ENCODE measurements at regions of chr2 and their contacts with region 1.

Region 1: DNA sequence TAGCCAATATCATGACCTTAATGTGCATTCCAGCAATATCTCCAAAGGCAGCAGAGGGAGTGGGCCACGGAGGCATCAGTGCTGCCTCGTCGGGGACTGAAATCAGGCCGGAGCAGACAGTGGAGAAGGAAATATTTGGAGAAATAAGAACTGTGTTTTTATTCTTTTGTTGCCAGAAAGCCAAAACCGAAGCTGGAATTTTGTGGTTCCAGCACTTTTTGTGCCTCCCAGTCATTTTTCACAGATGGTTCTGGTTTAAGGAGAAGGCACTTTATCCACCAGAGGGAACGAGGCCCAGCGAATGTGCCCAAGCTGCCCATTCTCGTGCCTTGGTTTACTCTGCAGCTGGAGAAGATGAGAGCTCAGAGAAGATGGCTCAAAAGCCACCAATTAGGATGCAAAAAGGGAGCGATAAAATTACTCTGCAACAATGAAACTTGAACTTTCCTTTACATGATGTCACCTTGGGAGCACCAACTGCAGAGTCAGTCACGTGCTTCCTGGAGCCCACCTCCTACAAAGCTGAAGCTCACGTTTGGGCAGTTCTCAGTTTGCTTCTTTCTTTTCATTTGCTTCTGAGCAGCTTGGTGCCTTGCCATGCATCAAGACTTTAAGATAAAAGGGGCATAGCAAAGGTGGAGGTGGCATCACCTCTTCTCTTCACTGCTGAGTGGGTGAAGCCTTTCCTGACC is 288.7 kb downstream of the LPIN1 start:
- DNase-seq: no peak
- ATAC-seq: no peak
- H3K4me3 ChIP-seq: no peak overlapping the region
- H3K27ac ChIP-seq: no peak overlapping the region
- H3K4me1 ChIP-seq: no peaks in the 10 kb centered on the region
- H3K27me3 ChIP-seq: no peaks in the 10 kb centered on the region
- CTCF ChIP-seq: no peak

Region 2: GRCh38 chr2:12096051-12096787 is 61.0 kb after region 1 on chr2:
- CTCF ChIA-PET with region 1: no interaction called
- POLR2A ChIA-PET with region 1: interaction called, 10 read pairs
- in situ Hi-C with region 1: no loop called
- intact Hi-C with region 1: no loop called
- DNase-seq: no peak
- ATAC-seq: no peak
- H3K4me3 ChIP-seq: no peak overlapping the region
- H3K27ac ChIP-seq: no peak overlapping the region
- H3K4me1 ChIP-seq: no peaks in the 10 kb centered on the region
- H3K27me3 ChIP-seq: no peaks in the 10 kb centered on the region
- CTCF ChIP-seq: no peak

Region 3: DNA sequence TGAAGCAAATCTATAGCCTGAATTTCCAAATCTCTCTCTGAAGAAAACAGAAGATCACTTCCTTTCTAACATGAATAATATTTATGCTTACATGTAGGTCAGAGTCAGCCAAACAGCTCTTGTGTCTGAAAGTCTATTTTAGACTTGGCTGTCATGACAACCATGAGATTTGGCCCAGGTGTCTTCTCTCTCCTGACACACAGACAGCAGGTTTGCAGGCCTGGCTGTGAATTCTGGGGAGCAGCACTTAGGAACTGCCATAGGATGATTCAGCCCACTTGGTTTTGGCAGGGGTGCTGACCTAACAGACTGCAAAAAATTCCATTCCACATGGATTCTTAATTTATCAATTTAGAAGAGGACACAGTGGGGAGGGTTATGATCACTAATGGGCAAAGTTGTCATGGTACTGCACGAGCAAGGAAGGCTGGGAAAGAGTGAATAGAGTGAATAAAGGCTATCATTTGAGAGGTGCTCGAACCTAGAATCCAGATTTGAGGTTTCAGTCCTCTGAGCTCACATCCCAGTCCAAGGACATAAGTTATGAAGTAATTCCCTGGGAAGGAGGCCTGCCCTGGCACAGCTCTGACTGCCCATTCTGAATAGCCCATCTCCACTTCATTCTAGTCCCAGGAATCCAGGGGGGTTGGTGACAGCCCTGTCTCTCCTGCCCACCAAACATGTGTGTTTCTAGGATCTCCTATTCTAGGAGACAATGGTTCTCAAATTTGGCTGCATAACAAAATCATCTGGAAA is 227.7 kb after region 1 on chr2:
- CTCF ChIA-PET with region 1: no interaction called
- POLR2A ChIA-PET with region 1: no interaction called
- in situ Hi-C with region 1: no loop called
- intact Hi-C with region 1: no loop called
- DNase-seq: no peak
- ATAC-seq: no peak
- H3K4me3 ChIP-seq: no peak overlapping the region
- H3K27ac ChIP-seq: no peak overlapping the region; the same call in 1 of the 2 replicates
- H3K4me1 ChIP-seq: no peaks in the 10 kb centered on the region
- H3K27me3 ChIP-seq: no peaks in the 10 kb centered on the region
- CTCF ChIP-seq: no peak

Measured in Panc1 (cell line).